PC-9 (cell line): ENCODE measurements at regions of chr17 and their contacts with region 1.

Region 1: DNA sequence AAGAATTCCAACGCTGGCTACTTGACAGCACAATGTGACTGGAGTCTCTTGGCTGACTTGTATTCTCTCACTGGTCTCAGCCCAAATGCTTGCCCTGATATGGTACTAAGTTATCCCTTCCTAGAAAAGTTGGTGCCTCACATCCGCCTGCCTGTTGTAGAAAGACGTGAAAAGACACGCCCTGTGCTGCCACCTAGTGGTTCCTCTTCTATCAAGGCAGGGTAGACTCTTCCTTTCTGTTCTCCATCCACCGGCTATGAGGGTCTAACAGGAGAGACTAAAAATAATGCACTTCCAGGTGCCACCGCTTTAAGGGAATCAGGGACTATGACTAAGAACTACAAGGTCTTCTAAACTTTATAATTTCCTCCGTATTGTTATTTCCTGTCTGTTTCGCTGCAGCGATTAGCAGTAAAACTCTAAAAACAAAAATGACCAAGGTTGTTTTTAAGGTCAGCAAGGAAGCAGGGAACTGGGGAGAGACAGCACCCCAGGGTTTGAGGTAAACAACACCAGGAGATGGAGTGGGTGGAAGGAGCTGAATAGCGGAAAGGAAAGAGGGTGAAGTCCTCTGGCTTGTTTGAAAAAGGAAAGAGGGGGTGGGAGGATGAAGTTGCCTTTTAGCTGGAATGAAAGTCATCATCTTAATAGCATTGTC is 109.5 kb downstream of the YPEL2 start:
- DNase-seq: peak; percentile 68 to 77
- H3K4me3 ChIP-seq: no peak overlapping the region
- H3K27ac ChIP-seq: no peak overlapping the region
- H3K4me1 ChIP-seq: peaks cover 13% of the 10 kb centered on the region
- H3K27me3 ChIP-seq: no peaks in the 10 kb centered on the region
- CTCF ChIP-seq: peak; percentile 92

Region 2: GRCh38 chr17:59220376-59221158 is 220.3 kb before region 1 on chr17 and contains the start of gene GDPD1:
- CTCF ChIA-PET with region 1: no interaction called
- POLR2A ChIA-PET with region 1: no interaction called
- intact Hi-C with region 1: loop called (anchors 2 kb)
- DNase-seq: peak; percentile 91 to 97
- H3K4me3 ChIP-seq: peak within 1 kb of the TSS; percentile 97
- H3K27ac ChIP-seq: peak within 1 kb of the TSS; percentile 57
- H3K4me1 ChIP-seq: peaks cover 23% of the 10 kb centered on the region
- H3K27me3 ChIP-seq: no peaks in the 10 kb centered on the region
- CTCF ChIP-seq: peak; percentile 77
- total RNA-seq, gene GDPD1: 3.1 and 3.4 TPM in 2 replicates

Region 3: GRCh38 chr17:59331129-59331928 is 109.6 kb before region 1 on chr17 and contains the start of gene YPEL2:
- CTCF ChIA-PET with region 1: interaction called, 6 read pairs
- POLR2A ChIA-PET with region 1: no interaction called
- intact Hi-C with region 1: loop called (anchors 1 kb)
- DNase-seq: peak; percentile 84 to 95
- H3K4me3 ChIP-seq: peak within 1 kb of the TSS; percentile 74
- H3K27ac ChIP-seq: peak within 1 kb of the TSS; percentile 50
- H3K4me1 ChIP-seq: peaks cover 32% of the 10 kb centered on the region
- H3K27me3 ChIP-seq: no peaks in the 10 kb centered on the region
- CTCF ChIP-seq: no peak
- total RNA-seq, gene YPEL2: 11.6 and 12.9 TPM in 2 replicates

Region 4: GRCh38 chr17:59406808-59407429 is 34.0 kb before region 1 on chr17:
- CTCF ChIA-PET with region 1: no interaction called
- POLR2A ChIA-PET with region 1: no interaction called
- intact Hi-C with region 1: no loop called
- DNase-seq: peak; percentile 56 to 88
- H3K4me3 ChIP-seq: no peak overlapping the region
- H3K27ac ChIP-seq: no peak overlapping the region
- H3K4me1 ChIP-seq: peaks cover 19% of the 10 kb centered on the region
- H3K27me3 ChIP-seq: no peaks in the 10 kb centered on the region
- CTCF ChIP-seq: no peak

Region 5: GRCh38 chr17:59421722-59422121 is 19.2 kb before region 1 on chr17:
- CTCF ChIA-PET with region 1: interaction called, 19 read pairs
- POLR2A ChIA-PET with region 1: no interaction called
- intact Hi-C with region 1: no loop called
- DNase-seq: no peak
- H3K4me3 ChIP-seq: no peak overlapping the region
- H3K27ac ChIP-seq: no peak overlapping the region
- H3K4me1 ChIP-seq: peaks cover 19% of the 10 kb centered on the region
- H3K27me3 ChIP-seq: no peaks in the 10 kb centered on the region
- CTCF ChIP-seq: no peak

Region 6: GRCh38 chr17:59527325-59527917 is 86.5 kb after region 1 on chr17:
- CTCF ChIA-PET with region 1: no interaction called
- POLR2A ChIA-PET with region 1: no interaction called
- intact Hi-C with region 1: no loop called
- DNase-seq: no peak
- H3K4me3 ChIP-seq: no peak overlapping the region
- H3K27ac ChIP-seq: no peak overlapping the region
- H3K4me1 ChIP-seq: no peaks in the 10 kb centered on the region
- H3K27me3 ChIP-seq: no peaks in the 10 kb centered on the region
- CTCF ChIP-seq: no peak

Region 7: GRCh38 chr17:60036796-60037612 is 596.1 kb after region 1 on chr17:
- CTCF ChIA-PET with region 1: no interaction called
- POLR2A ChIA-PET with region 1: no interaction called
- intact Hi-C with region 1: loop called (anchors 10 kb)
- DNase-seq: peak; percentile 71 to 72
- H3K4me3 ChIP-seq: no peak overlapping the region
- H3K27ac ChIP-seq: no peak overlapping the region
- H3K4me1 ChIP-seq: no peaks in the 10 kb centered on the region
- H3K27me3 ChIP-seq: no peaks in the 10 kb centered on the region
- CTCF ChIP-seq: peak; percentile 93